Body of pancreas (tissue), 4 donors: ENCODE measurements at regions of chr1 and their contacts with region 1.

Region 1: GRCh38 chr1:157490467-157491165 is 61.7 kb downstream of the FCRL5 start:
- DNase-seq: peak; percentile 73 to 84 (median 80)
- ATAC-seq: peak; percentile 64
- H3K4me3 ChIP-seq: no peak overlapping the region
- H3K27ac ChIP-seq: no peak overlapping the region
- H3K4me1 ChIP-seq: no peaks in the 10 kb centered on the region
- H3K27me3 ChIP-seq: no peaks in the 10 kb centered on the region
- CTCF ChIP-seq: peak; percentile 38 to 70 (median 56)
- POLR2A ChIP-seq: no peak

Region 2: DNA sequence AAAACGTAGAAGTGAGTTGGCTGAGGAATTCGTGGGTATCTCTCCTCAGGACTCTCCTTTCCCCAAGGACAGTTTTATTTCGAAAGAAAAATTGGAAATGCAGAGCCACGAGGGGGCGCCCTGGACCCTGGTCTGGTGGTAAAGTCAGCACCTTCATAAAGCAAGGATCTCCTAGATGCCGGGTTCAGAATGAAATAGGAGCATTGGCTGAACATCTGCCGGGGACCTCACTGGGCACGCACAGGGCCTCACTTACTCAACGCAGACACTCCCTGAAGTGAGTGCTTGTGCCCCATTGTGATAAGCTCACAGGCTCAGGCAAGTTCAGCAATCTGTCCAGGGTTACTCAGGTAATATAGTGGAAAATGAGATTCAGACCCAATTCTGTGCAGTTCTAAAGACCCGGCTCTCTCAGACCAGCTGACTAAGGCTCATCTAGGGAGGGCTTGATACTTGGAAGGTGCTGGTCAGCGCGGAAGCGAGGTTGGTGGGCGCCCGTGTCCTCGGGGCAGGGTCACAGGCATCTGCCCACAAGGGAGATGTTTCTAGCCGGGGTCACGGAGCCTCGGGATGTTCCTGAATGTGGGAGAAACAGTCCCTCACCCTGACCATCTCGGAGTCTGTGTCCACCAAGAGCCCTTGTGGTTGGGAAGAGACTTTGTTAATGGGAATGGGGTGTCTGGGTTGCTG is 296.8 kb before region 1 on chr1:
- intact Hi-C with region 1: loop called (anchors 5 kb)
- DNase-seq: peak; percentile 76 to 85 (median 81)
- ATAC-seq: peak; percentile 51
- H3K4me3 ChIP-seq: no peak overlapping the region
- H3K27ac ChIP-seq: no peak overlapping the region
- H3K4me1 ChIP-seq: peaks cover 16% of the 10 kb centered on the region
- H3K27me3 ChIP-seq: no peaks in the 10 kb centered on the region
- CTCF ChIP-seq: peak; percentile 61 to 77 (median 68)
- POLR2A ChIP-seq: no peak

Region 3: DNA sequence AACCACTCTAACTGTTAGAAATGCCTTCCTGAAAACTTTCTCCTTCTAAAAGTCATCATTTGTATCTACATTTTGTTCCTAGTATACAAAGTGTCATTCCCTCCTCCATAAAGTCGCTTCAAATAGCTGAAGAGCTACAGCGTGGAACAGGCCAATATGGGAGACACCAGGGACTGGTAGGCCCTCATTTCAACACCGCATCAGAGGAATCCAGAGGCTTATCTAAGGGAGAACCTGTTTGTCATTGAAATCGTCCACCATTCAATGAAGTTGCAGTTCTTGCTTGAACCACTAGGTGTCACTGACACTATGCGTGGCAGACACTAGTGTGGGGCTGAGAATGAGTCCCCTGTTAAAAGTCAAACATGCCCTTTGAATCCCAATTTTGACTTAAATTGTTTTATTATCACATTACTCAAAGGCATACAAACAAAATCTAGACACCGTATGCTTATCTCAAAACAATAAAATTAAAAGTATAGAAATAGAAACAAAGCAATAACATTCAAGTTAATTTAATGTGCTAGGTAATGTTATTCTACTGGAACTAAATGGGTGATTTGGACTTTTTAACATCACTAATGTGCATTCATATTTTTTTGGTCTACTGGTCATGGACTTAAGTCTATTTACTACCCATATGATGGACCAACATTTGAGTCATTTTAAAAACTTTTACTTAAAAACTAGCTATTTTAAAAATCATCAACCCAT is 120.7 kb before region 1 on chr1:
- intact Hi-C with region 1: loop called (anchors 10 kb)
- DNase-seq: peak; percentile 48 to 63 (median 50)
- ATAC-seq: peak; percentile 72
- H3K4me3 ChIP-seq: no peak overlapping the region
- H3K27ac ChIP-seq: no peak overlapping the region
- H3K4me1 ChIP-seq: no peaks in the 10 kb centered on the region
- H3K27me3 ChIP-seq: no peaks in the 10 kb centered on the region
- CTCF ChIP-seq: peak; percentile 76 to 86 (median 81)
- POLR2A ChIP-seq: no peak

Region 4: GRCh38 chr1:157399984-157400382 is 90.6 kb before region 1 on chr1:
- intact Hi-C with region 1: no loop called
- DNase-seq: no peak
- ATAC-seq: no peak
- H3K4me3 ChIP-seq: no peak overlapping the region
- H3K27ac ChIP-seq: no peak overlapping the region
- H3K4me1 ChIP-seq: no peaks in the 10 kb centered on the region
- H3K27me3 ChIP-seq: no peaks in the 10 kb centered on the region
- CTCF ChIP-seq: no peak
- POLR2A ChIP-seq: no peak

Region 5: DNA sequence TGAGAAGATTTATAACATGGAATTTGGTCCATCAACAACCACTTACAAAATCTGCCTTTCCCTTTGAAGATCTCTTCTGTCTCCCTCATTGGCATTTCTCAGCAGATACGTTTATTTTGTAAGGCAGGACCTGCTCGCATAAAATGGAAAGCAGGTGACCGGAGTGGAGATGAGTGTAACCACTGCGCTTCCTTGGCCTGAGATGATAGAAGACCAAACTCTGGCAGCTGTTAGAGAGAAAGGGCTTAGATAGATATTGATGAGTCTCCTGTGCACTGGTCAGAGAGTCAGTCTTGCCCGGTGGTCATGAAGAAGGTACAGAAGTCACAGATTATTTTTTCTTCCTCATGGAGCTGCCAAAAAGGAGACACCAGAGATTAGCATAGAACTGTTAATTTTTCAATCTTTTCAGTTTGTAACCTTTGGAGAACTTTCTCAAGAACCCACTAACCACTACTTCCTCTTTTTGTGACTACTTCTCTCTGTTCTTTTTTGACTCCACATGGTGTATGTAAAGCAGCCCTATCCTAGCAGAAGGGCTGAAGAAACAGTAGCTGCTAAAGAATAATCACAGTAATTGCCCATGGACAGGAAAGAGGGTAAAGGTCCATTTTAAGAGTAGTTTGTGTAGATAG is 162.4 kb after region 1 on chr1:
- intact Hi-C with region 1: no loop called
- DNase-seq: no peak
- ATAC-seq: no peak
- H3K4me3 ChIP-seq: no peak overlapping the region
- H3K27ac ChIP-seq: no peak overlapping the region
- H3K4me1 ChIP-seq: no peaks in the 10 kb centered on the region
- H3K27me3 ChIP-seq: no peaks in the 10 kb centered on the region
- CTCF ChIP-seq: no peak
- POLR2A ChIP-seq: no peak